CD4-positive, alpha-beta memory T cell (primary cell): ENCODE measurements at regions of chr6 and their contacts with region 1.

Region 1: GRCh38 chr6:30515932-30516753 is 26.8 kb downstream of the HLA-E start:
- DNase-seq: peak; percentile 91 to 98 (median 96)
- H3K4me3 ChIP-seq: peak overlapping the region; percentile 42 to 64
- H3K4me3 Mint-ChIP-seq: peak overlapping the region; percentile 85 to 92 (median 88)
- H3K27ac ChIP-seq: peak overlapping the region; percentile 91
- H3K27ac Mint-ChIP-seq: peak overlapping the region; percentile 95 to 99 (median 99)
- H3K4me1 ChIP-seq: peaks cover 66% of the 10 kb centered on the region
- H3K4me1 Mint-ChIP-seq: peaks cover 28 to 78% (median 49%) of the 10 kb centered on the region in 4 donors
- H3K27me3 ChIP-seq: no peaks in the 10 kb centered on the region
- H3K27me3 Mint-ChIP-seq: no peaks in the 10 kb centered on the region

Region 2: DNA sequence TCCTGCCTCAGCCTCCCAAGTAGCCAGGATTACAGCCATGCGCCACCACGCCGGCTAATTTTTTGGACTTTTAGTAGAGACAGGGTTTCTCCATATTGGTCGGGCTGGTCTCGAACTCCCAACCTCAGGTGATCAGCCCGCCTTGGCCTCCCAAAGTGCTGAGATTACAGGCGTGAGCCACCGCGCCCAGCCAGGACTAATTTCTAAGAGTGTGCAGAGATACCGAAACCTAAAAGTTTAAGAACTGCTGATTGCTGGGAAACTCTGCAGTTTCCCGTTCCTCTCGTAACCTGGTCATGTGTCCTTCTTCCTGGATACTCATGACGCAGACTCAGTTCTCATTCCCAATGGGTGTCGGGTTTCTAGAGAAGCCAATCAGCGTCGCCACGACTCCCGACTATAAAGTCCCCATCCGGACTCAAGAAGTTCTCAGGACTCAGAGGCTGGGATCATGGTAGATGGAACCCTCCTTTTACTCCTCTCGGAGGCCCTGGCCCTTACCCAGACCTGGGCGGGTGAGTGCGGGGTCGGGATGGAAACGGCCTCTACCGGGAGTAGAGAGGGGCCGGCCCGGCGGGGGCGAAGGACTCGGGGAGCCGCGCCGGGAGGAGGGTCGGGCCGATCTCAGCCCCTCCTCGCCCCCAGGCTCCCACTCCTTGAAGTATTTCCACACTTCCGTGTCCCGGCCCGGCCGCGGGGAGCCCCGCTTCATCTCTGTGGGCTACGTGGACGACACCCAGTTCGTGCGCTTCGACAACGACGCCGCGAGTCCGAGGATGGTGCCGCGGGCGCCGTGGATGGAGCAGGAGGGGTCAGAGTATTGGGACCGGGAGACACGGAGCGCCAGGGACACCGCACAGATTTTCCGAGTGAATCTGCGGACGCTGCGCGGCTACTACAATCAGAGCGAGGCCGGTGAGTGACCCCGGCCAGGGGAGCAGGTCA is 26.8 kb before region 1 on chr6 and contains the start of gene HLA-E:
- CTCF ChIA-PET with region 1: interaction called, 15 read pairs
- POLR2A ChIA-PET with region 1: interaction called, 743 read pairs
- intact Hi-C with region 1: loop called (anchors 1 kb)
- DNase-seq: peak; percentile 92 to 98 (median 96)
- H3K4me3 ChIP-seq: peak within 1 kb of the TSS; percentile 98 to 99
- H3K4me3 Mint-ChIP-seq: peak within 1 kb of the TSS; percentile 98 to 99 (median 99)
- H3K27ac ChIP-seq: peak within 1 kb of the TSS; percentile 95
- H3K27ac Mint-ChIP-seq: peak within 1 kb of the TSS; percentile 97 to 99 (median 99)
- H3K4me1 ChIP-seq: peaks cover 30% of the 10 kb centered on the region
- H3K4me1 Mint-ChIP-seq: peaks cover 28 to 60% (median 44%) of the 10 kb centered on the region in 4 donors
- H3K27me3 ChIP-seq: no peaks in the 10 kb centered on the region
- H3K27me3 Mint-ChIP-seq: no peaks in the 10 kb centered on the region
- total RNA-seq, gene HLA-E: 1,097 to 1,122 TPM

Region 3: DNA sequence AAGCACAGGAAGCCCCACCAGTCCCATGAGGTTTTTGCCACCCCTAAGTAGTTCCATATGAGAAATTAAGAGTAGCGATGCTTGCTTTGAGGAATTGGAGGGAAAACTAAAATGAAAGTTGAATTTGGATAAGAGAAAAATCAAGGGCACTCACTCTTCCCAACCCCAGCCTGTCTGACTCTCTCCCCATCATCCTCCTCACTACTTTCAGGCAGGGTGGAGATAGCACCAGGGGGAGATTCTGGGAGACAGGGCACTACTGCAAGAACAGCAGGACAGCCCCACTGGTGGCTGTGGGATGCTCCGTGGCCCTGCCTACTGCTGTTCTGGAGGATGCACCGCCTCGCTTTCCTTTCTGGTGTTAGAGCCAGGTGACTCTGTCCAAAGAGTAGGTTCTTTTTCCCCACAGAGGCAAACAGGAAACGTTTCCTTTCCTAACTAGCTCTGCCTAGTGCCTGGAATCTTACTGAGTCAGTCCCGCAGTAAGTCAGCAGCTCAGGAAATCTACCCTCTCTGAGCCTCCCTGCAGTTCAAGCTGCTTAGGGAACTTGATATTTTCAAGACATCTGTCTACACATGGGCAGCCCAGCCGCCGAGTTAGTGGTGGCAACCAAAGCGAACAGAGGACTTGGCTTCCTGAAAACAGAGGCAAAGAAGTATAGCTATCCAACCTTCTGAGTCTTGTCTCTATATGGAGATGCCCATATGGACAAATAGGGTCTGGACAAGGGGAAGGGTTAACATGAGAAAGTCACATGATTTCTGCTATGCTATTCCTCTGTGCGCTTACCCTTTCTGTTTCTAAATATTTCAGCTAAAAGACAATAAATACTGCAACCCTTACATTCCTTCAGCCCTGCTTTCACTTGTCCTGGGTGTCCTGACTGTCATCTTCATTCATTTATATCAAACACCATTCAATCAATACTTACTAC is 15.5 kb before region 1 on chr6:
- CTCF ChIA-PET with region 1: interaction called, 8 read pairs
- POLR2A ChIA-PET with region 1: interaction called, 743 read pairs
- intact Hi-C with region 1: no loop called
- DNase-seq: no peak
- H3K4me3 ChIP-seq: peak overlapping the region in 1 of 2 donors; percentile 6
- H3K4me3 Mint-ChIP-seq: peak overlapping the region; percentile 70 to 85 (median 80)
- H3K27ac ChIP-seq: no peak overlapping the region
- H3K27ac Mint-ChIP-seq: peak overlapping the region; percentile 25 to 89 (median 73)
- H3K4me1 ChIP-seq: peaks cover 34% of the 10 kb centered on the region
- H3K4me1 Mint-ChIP-seq: peaks cover 24 to 42% (median 32%) of the 10 kb centered on the region in 4 donors
- H3K27me3 ChIP-seq: no peaks in the 10 kb centered on the region
- H3K27me3 Mint-ChIP-seq: no peaks in the 10 kb centered on the region